Heart right ventricle (tissue), 16 donors: ENCODE measurements at regions of chr11 and their contacts with region 1.

Region 1: GRCh38 chr11:108647701-108648527 is 17.0 kb upstream of the DDX10 start:
- DNase-seq: peak; percentile 56 to 83
- ATAC-seq: peak; percentile 86 to 96 (median 94)
- H3K4me3 ChIP-seq: peak overlapping the region in 2 of 10 donors; percentile 3 to 27
- H3K27ac ChIP-seq: peak overlapping the region; percentile 14 to 80 (median 64)
- H3K4me1 ChIP-seq: peaks cover 0 to 7% (median 0%) of the 10 kb centered on the region in 9 donors
- H3K27me3 ChIP-seq: no peaks in the 10 kb centered on the region
- CTCF ChIP-seq: peak; percentile 45 to 84 (median 74)

Region 2: DNA sequence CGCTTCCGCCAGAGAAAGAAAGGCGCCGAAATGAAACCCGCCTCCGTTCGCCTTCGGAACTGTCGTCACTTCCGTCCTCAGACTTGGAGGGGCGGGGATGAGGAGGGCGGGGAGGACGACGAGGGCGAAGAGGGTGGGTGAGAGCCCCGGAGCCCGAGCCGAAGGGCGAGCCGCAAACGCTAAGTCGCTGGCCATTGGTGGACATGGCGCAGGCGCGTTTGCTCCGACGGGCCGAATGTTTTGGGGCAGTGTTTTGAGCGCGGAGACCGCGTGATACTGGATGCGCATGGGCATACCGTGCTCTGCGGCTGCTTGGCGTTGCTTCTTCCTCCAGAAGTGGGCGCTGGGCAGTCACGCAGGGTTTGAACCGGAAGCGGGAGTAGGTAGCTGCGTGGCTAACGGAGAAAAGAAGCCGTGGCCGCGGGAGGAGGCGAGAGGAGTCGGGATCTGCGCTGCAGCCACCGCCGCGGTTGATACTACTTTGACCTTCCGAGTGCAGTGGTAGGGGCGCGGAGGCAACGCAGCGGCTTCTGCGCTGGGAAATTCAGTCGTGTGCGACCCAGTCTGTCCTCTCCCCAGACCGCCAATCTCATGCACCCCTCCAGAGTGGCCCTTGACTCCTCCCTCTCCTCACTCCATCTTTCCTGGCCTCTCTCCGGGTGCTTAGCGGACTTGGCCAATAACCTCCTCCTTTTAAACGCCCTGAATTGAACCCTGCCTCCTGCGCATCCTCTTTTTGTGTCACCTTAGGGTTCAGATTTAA is 425.0 kb before region 1 on chr11 and contains the start of gene ATM:
- intact Hi-C with region 1: loop called in 1 of 10 experiments (anchors 5 kb)
- DNase-seq: peak; percentile 99 to 100
- ATAC-seq: peak; percentile 96 to 99 (median 98)
- H3K4me3 ChIP-seq: peak within 1 kb of the TSS; percentile 61 to 91 (median 74)
- H3K27ac ChIP-seq: peak within 1 kb of the TSS; percentile 80 to 93 (median 90)
- H3K4me1 ChIP-seq: peaks cover 3 to 68% (median 38%) of the 10 kb centered on the region in 9 donors
- H3K27me3 ChIP-seq: no peaks in the 10 kb centered on the region
- CTCF ChIP-seq: peak; percentile 33 to 94 (median 73)
- total RNA-seq, gene ATM: 23.5 to 50.7 (median 34.1) TPM

Region 3: GRCh38 chr11:108432783-108433182 is 215.1 kb before region 1 on chr11:
- intact Hi-C with region 1: loop called in 1 of 10 experiments (anchors 10 kb)
- DNase-seq: no peak
- ATAC-seq: no peak
- H3K4me3 ChIP-seq: no peak overlapping the region
- H3K27ac ChIP-seq: no peak overlapping the region
- H3K4me1 ChIP-seq: no peaks in the 10 kb centered on the region
- H3K27me3 ChIP-seq: no peaks in the 10 kb centered on the region
- CTCF ChIP-seq: no peak

Region 4: DNA sequence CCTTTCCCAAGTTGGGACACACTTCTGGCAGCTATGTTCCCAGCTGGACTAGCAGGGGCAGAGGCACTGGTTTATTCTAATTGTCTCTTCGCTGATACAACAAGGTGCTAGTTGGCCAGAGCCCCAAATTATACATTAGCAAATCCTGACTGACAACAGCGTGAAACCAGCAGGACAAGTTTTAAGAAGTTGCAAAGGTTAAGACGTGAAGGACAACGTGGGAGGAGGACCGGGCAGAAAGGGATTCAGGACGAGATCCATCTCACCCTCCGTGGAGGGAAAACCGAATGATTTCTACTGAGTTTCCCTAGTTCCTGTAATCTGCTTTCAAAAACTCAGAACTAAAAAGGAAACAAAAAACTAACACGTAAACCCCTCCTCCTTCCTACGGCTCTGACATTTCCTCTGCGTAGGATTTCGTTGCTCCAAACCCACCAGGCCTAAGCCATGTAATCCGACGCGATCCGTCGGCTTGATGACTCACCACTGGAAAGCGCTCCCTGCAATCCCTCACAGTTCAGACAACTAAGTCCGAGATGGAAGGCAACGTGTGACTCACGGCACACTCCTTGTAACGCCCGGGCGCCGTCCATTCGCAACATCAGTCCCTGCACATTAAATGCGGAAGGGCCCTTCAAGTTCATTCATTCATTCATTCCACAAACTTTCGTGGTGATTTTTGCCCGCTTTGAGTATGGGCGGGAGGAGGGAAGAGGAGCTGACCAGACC is 150.4 kb before region 1 on chr11:
- intact Hi-C with region 1: loop called in 4 of 10 experiments (anchors 5 to 10 kb)
- DNase-seq: peak; percentile 77 to 89
- ATAC-seq: peak; percentile 93 to 98 (median 96)
- H3K4me3 ChIP-seq: peak overlapping the region; percentile 62 to 83 (median 76)
- H3K27ac ChIP-seq: peak overlapping the region; percentile 83 to 100 (median 95)
- H3K4me1 ChIP-seq: peaks cover 3 to 22% (median 18%) of the 10 kb centered on the region in 9 donors
- H3K27me3 ChIP-seq: no peaks in the 10 kb centered on the region
- CTCF ChIP-seq: no peak

Region 5: DNA sequence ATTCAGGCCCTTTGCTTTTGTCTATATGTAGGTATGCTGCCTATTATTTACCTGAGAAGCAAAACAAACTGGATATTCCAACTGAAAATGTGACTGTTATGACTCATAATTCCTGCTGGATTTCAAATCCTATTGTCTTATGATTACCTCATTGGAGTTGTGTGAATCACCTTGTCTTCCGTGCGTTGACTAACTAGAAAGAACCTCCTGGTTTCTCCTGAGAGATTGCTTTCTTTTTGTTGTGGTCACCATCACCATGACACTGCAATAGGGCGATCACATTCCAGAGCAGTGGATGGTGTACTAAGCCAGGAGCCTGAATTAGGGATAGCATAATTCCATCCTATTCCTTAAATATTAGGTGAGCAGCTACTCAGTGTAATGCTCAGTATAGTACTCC is 31.3 kb before region 1 on chr11:
- intact Hi-C with region 1: no loop called
- DNase-seq: no peak
- ATAC-seq: no peak
- H3K4me3 ChIP-seq: no peak overlapping the region
- H3K27ac ChIP-seq: no peak overlapping the region
- H3K4me1 ChIP-seq: no peaks in the 10 kb centered on the region
- H3K27me3 ChIP-seq: peaks cover 0 to 9% (median 0%) of the 10 kb centered on the region in 7 donors
- CTCF ChIP-seq: no peak

Region 6: GRCh38 chr11:108664730-108665525 is 17.0 kb after region 1 on chr11 and contains the start of gene DDX10:
- intact Hi-C with region 1: no loop called
- DNase-seq: peak; percentile 98
- ATAC-seq: peak; percentile 99 to 100 (median 100)
- H3K4me3 ChIP-seq: peak within 1 kb of the TSS; percentile 69 to 98 (median 84)
- H3K27ac ChIP-seq: peak within 1 kb of the TSS in 9 of 10 donors; percentile 29 to 85 (median 68)
- H3K4me1 ChIP-seq: peaks cover 7 to 42% (median 30%) of the 10 kb centered on the region in 9 donors
- H3K27me3 ChIP-seq: no peaks in the 10 kb centered on the region
- CTCF ChIP-seq: peak in 5 of 9 donors; percentile 12 to 47 (median 18)
- total RNA-seq, gene DDX10: 9.3 to 15.3 (median 11.5) TPM